Naive thymus-derived CD4-positive, alpha-beta T cell (primary cell): ENCODE measurements at regions of chr16 and their contacts with region 1.

Region 1: DNA sequence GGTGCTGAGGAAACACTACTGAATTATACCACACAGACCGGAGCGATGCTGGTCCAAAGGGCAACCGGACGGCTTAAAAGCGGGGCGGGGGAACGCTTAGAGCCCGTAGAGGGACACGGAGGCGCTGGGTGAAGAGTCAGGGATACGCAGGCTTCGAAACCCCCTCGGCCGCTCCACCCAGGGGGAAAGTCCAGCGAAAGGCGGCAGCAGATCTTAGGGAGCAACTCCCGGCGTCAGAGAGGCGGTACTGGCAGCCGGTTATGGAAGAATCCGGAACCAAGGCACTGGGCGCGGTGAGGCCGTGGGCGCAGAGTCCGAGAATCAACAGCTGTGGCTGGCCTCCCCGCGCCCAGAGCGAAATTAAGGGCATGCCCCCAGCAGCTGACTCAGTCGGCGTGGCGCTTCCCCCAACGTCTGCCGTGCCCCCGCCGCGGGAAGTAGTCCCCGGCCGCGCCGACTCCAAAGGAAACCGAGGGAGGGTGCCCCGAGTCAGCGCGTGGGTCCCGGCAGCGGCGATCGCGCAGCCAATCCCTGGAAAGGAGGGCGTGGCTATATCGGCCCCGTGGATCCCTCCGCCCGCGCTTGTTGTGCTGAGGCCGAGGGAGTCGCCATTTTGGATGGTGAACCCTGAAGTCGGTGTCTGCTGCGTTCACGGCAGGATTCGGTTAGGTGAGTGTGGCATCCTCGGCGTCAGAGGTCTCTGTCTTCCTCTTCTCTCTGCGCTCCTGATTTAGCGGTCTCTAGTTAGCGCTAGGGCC is at the start of gene IST1:
- DNase-seq: peak; percentile 88 to 98 (median 98)
- ATAC-seq: peak; percentile 97
- H3K4me3 ChIP-seq: peak within 1 kb of the TSS; percentile 99
- H3K4me3 Mint-ChIP-seq: peak within 1 kb of the TSS; percentile 95 to 99 (median 96)
- H3K27ac ChIP-seq: peak within 1 kb of the TSS; percentile 98
- H3K27ac Mint-ChIP-seq: peak within 1 kb of the TSS; percentile 92 to 98 (median 97)
- H3K4me1 ChIP-seq: peaks cover 22 to 25% of the 10 kb centered on the region in 2 donors
- H3K4me1 Mint-ChIP-seq: peaks cover 23 to 43% (median 30%) of the 10 kb centered on the region in 7 donors
- H3K27me3 ChIP-seq: no peaks in the 10 kb centered on the region
- H3K27me3 Mint-ChIP-seq: no peaks in the 10 kb centered on the region
- total RNA-seq, gene IST1: 176 to 303 (median 286) TPM

Region 2: DNA sequence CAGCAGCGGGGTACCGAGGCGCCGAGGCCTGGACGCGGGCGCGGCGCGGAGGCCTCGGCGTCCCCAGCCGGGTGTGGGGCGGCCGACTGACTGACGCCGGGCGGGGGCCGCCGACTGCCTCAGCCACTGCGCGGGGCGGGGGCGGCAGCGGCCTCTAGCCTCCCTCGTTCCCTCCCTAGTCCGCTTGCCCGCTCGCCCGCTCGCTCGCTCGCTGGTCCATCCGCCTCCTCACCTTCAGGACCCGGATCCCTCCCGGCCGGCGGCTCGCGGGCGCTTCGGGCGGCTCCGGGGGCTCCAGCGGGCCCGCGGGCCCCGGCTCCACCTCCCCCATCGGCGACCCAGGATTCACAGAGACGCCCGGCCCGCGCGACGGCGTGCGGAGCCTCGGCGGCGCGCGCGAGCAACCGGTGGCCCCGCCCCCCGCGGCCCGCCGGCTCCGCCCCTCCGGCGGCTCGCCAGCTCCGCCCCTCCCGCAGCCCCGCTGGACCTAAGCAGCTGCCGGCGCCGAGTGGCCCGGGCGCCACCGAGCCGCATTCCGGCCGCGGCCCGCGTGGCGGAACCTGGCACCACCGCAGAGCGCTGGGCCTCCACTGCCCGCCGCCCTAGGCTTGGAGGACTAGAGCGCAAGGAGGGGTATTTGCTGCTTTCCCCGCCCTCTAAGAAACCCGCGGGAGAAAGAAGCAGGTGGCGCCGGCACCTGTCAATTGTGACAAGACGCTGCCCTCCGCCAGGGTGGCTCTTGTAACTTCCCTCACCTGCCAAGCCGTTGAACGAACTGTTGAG is 171.4 kb before region 1 on chr16:
- CTCF ChIA-PET with region 1: no interaction called
- POLR2A ChIA-PET with region 1: no interaction called
- intact Hi-C with region 1: loop called (anchors 1 kb)
- DNase-seq: peak; percentile 81 to 93 (median 88)
- ATAC-seq: peak; percentile 93
- H3K4me3 ChIP-seq: peak overlapping the region; percentile 79
- H3K4me3 Mint-ChIP-seq: peak overlapping the region; percentile 80 to 97 (median 86)
- H3K27ac ChIP-seq: peak overlapping the region; percentile 79
- H3K27ac Mint-ChIP-seq: peak overlapping the region in 8 of 9 donors; percentile 30 to 92 (median 78)
- H3K4me1 ChIP-seq: peaks cover 9% of the 10 kb centered on the region in 2 donors
- H3K4me1 Mint-ChIP-seq: peaks cover 7 to 20% (median 19%) of the 10 kb centered on the region in 7 donors
- H3K27me3 ChIP-seq: no peaks in the 10 kb centered on the region
- H3K27me3 Mint-ChIP-seq: peaks cover 0 to 17% (median 0%) of the 10 kb centered on the region in 5 donors

Region 3: DNA sequence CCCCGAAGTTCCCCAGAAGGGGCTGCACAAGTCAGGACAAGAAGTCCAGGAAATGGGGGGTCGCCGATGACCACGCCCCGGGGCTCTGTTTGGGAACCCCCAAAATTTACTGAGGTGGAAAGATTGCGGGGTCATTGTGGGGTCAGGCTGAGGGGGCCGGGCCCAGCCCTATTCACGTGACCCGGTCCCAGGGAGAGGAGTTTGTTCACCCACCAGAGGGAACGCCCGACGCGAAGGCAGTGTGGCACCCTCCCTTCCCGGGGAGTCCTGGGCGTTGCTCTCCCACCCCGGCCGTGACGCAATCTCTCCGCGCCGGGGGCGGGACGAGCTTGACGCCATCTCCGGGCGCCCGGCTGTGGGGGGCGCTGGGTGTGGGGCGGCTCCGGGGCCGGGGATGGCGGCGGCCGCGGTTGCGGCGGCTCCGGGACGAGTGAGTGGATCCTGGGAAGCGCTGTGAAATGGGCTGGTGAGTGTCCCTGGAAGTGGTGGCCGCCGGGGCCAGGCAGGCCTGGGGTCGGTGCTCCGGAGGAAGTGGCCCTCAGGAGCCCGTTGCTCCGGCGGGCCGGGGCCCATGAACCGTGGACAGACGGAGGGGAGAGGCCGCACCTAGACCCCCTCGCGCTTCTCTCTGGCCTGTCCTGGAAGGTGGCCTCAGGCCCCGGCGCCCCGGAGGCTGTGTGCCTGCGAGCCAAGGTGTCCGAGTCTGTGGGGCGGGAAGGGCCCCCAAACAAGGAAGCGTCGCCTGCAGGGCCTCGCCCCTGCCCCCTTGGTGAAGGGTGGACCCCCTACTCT is 49.3 kb before region 1 on chr16 and contains the start of gene ATXN1L:
- CTCF ChIA-PET with region 1: interaction called, 5 read pairs
- POLR2A ChIA-PET with region 1: interaction called, 4 read pairs
- intact Hi-C with region 1: loop called (anchors 1 kb)
- DNase-seq: peak; percentile 91 to 100 (median 95)
- ATAC-seq: peak; percentile 97
- H3K4me3 ChIP-seq: peak within 1 kb of the TSS; percentile 97
- H3K4me3 Mint-ChIP-seq: peak within 1 kb of the TSS; percentile 92 to 96 (median 94)
- H3K27ac ChIP-seq: peak within 1 kb of the TSS; percentile 92
- H3K27ac Mint-ChIP-seq: peak within 1 kb of the TSS; percentile 95 to 98 (median 97)
- H3K4me1 ChIP-seq: peaks cover 10 to 16% of the 10 kb centered on the region in 2 donors
- H3K4me1 Mint-ChIP-seq: peaks cover 18 to 50% (median 42%) of the 10 kb centered on the region in 7 donors
- H3K27me3 ChIP-seq: no peaks in the 10 kb centered on the region
- H3K27me3 Mint-ChIP-seq: no peaks in the 10 kb centered on the region
- total RNA-seq, gene ATXN1L: 24.6 to 52.9 (median 30.7) TPM

Region 4: GRCh38 chr16:72008424-72009216 is 113.5 kb after region 1 on chr16 and contains the start of gene DHODH:
- CTCF ChIA-PET with region 1: no interaction called
- POLR2A ChIA-PET with region 1: interaction called, 3 read pairs
- intact Hi-C with region 1: loop called (anchors 1 to 2 kb)
- DNase-seq: peak; percentile 92 to 99 (median 97)
- ATAC-seq: peak; percentile 100
- H3K4me3 ChIP-seq: peak within 1 kb of the TSS; percentile 100
- H3K4me3 Mint-ChIP-seq: peak within 1 kb of the TSS; percentile 92 to 100 (median 98)
- H3K27ac ChIP-seq: peak within 1 kb of the TSS; percentile 62
- H3K27ac Mint-ChIP-seq: peak within 1 kb of the TSS; percentile 75 to 96 (median 89)
- H3K4me1 ChIP-seq: no peaks in the 10 kb centered on the region
- H3K4me1 Mint-ChIP-seq: peaks cover 9 to 22% (median 16%) of the 10 kb centered on the region in 7 donors
- H3K27me3 ChIP-seq: no peaks in the 10 kb centered on the region
- H3K27me3 Mint-ChIP-seq: peaks cover 0 to 3% (median 0%) of the 10 kb centered on the region in 5 donors
- total RNA-seq, gene DHODH: 4.9 to 15.6 (median 14.0) TPM

Region 5: GRCh38 chr16:72099377-72099818 is 204.3 kb after region 1 on chr16:
- CTCF ChIA-PET with region 1: no interaction called
- POLR2A ChIA-PET with region 1: no interaction called
- intact Hi-C with region 1: loop called in 1 of 2 experiments (anchors 2 kb)
- DNase-seq: peak in 6 of 9 donors; percentile 11 to 54 (median 31)
- ATAC-seq: peak; percentile 90
- H3K4me3 ChIP-seq: no peak overlapping the region
- H3K4me3 Mint-ChIP-seq: no peak overlapping the region
- H3K27ac ChIP-seq: no peak overlapping the region
- H3K27ac Mint-ChIP-seq: peak overlapping the region in 1 of 9 donors; percentile 51
- H3K4me1 ChIP-seq: peaks cover 6 to 10% of the 10 kb centered on the region in 2 donors
- H3K4me1 Mint-ChIP-seq: peaks cover 15 to 34% (median 27%) of the 10 kb centered on the region in 7 donors
- H3K27me3 ChIP-seq: no peaks in the 10 kb centered on the region
- H3K27me3 Mint-ChIP-seq: no peaks in the 10 kb centered on the region